IMR-90 (cell line): ENCODE measurements at regions of chr7 and their contacts with region 1.

Region 1: DNA sequence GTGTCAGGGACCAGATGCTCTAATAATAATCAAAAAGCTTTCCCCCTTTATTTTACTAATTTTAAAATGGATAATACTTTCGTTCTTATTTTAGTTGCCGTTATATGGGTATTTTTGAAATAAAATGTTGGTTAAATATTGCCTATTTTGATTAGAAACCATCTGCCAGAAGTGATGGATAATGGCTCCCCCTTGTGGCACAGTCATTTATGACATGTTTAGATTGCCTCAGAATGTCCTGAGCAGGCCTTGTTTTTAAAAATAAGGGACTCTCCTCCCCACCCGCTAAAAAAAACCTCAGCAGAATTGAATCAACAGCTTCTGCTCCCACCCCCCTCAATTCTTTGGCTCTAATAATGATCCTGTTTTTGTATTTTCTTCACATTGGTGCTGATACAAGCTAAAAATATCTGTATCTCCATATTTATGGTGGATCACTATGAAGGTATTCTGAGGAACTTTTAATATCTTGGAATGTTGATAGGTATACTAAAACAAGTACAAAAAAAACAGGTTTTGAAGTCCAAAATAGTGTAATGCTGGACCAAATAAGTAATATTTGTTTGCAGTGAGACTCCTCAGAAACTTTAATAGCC is 38.8 kb downstream of the TMEM60 start:
- DNase-seq: peak; percentile 76
- ATAC-seq: peak; percentile 80
- H3K4me3 ChIP-seq: no peak overlapping the region
- H3K27ac ChIP-seq: no peak overlapping the region
- H3K4me1 ChIP-seq: no peaks in the 10 kb centered on the region; the same call in 1 of the 2 replicates
- H3K27me3 ChIP-seq: no peaks in the 10 kb centered on the region
- CTCF ChIP-seq: peak; percentile 87
- POLR2A ChIP-seq: no peak
- RAD21 ChIP-seq: peak; percentile 92

Region 2: GRCh38 chr7:77651573-77652162 is 107.7 kb before region 1 on chr7:
- CTCF ChIA-PET with region 1: interaction called, 4 read pairs
- POLR2A ChIA-PET with region 1: no interaction called
- dilution Hi-C with region 1: no loop called
- in situ Hi-C with region 1: loop called (anchors 5 kb)
- intact Hi-C with region 1: loop called (anchors 1 kb)
- DNase-seq: peak; percentile 47
- ATAC-seq: peak; percentile 19; the same call in 1 of the 2 replicates
- H3K4me3 ChIP-seq: no peak overlapping the region
- H3K27ac ChIP-seq: no peak overlapping the region
- H3K4me1 ChIP-seq: peaks cover 6% of the 10 kb centered on the region; the same call in 1 of the 2 replicates
- H3K27me3 ChIP-seq: no peaks in the 10 kb centered on the region
- CTCF ChIP-seq: peak; percentile 65
- POLR2A ChIP-seq: no peak
- RAD21 ChIP-seq: peak; percentile 64

Region 3: GRCh38 chr7:77657427-77658224 is 101.8 kb before region 1 on chr7:
- CTCF ChIA-PET with region 1: interaction called, 5 read pairs
- POLR2A ChIA-PET with region 1: no interaction called
- dilution Hi-C with region 1: no loop called
- in situ Hi-C with region 1: loop called (anchors 5 kb)
- intact Hi-C with region 1: loop called (anchors 1 kb)
- DNase-seq: peak; percentile 43
- ATAC-seq: peak; percentile 71
- H3K4me3 ChIP-seq: no peak overlapping the region
- H3K27ac ChIP-seq: no peak overlapping the region
- H3K4me1 ChIP-seq: peaks cover 1% of the 10 kb centered on the region; the same call in 1 of the 2 replicates
- H3K27me3 ChIP-seq: no peaks in the 10 kb centered on the region
- CTCF ChIP-seq: peak; percentile 60
- POLR2A ChIP-seq: no peak
- RAD21 ChIP-seq: peak; percentile 67

Region 4: GRCh38 chr7:77696198-77697028 is 63.0 kb before region 1 on chr7 and contains the start of gene RSBN1L:
- CTCF ChIA-PET with region 1: no interaction called
- POLR2A ChIA-PET with region 1: no interaction called
- dilution Hi-C with region 1: no loop called
- in situ Hi-C with region 1: no loop called
- intact Hi-C with region 1: loop called (anchors 1 kb)
- DNase-seq: peak; percentile 97
- ATAC-seq: peak; percentile 98
- H3K4me3 ChIP-seq: peak within 1 kb of the TSS; percentile 91
- H3K27ac ChIP-seq: peak within 1 kb of the TSS; percentile 92
- H3K4me1 ChIP-seq: no peaks in the 10 kb centered on the region
- H3K27me3 ChIP-seq: no peaks in the 10 kb centered on the region
- CTCF ChIP-seq: peak; percentile 39
- POLR2A ChIP-seq: peak; percentile 79
- RAD21 ChIP-seq: peak; percentile 7; the same call in 1 of the 2 replicates
- total RNA-seq, gene RSBN1L: 14.7 and 23.6 TPM in 2 replicates

Region 5: GRCh38 chr7:77710861-77711260 is 48.5 kb before region 1 on chr7:
- CTCF ChIA-PET with region 1: no interaction called
- POLR2A ChIA-PET with region 1: no interaction called
- dilution Hi-C with region 1: no loop called
- in situ Hi-C with region 1: no loop called
- intact Hi-C with region 1: loop called (anchors 1 kb)
- DNase-seq: no peak
- ATAC-seq: no peak
- H3K4me3 ChIP-seq: no peak overlapping the region
- H3K27ac ChIP-seq: no peak overlapping the region
- H3K4me1 ChIP-seq: no peaks in the 10 kb centered on the region
- H3K27me3 ChIP-seq: no peaks in the 10 kb centered on the region
- CTCF ChIP-seq: no peak
- POLR2A ChIP-seq: no peak
- RAD21 ChIP-seq: no peak

Region 6: DNA sequence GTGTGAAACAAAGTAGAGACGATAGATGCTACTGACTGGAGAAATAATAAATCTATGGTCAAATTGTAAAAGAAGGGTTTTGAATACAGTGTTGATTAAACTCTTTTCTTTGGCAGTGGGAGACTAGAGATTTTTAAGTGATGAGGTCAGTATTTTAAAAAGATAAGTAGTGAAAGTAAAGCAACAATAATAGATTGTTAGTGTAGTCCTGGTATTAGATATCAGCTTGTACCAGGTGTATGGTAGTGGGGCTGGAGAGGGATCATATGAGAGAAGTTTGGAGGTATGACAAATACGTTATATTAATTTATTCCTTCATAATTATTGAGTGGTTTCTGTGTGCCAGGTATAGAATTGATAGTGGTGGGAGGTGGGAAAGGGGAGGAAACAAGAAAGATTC is 64.4 kb after region 1 on chr7:
- CTCF ChIA-PET with region 1: no interaction called
- POLR2A ChIA-PET with region 1: no interaction called
- dilution Hi-C with region 1: no loop called
- in situ Hi-C with region 1: no loop called
- intact Hi-C with region 1: no loop called
- DNase-seq: no peak
- ATAC-seq: no peak
- H3K4me3 ChIP-seq: no peak overlapping the region
- H3K27ac ChIP-seq: no peak overlapping the region
- H3K4me1 ChIP-seq: no peaks in the 10 kb centered on the region
- H3K27me3 ChIP-seq: no peaks in the 10 kb centered on the region
- CTCF ChIP-seq: no peak
- POLR2A ChIP-seq: no peak
- RAD21 ChIP-seq: no peak